ENCODE measurements at regions of chr2 and their contacts with region 1.

Region 1: DNA sequence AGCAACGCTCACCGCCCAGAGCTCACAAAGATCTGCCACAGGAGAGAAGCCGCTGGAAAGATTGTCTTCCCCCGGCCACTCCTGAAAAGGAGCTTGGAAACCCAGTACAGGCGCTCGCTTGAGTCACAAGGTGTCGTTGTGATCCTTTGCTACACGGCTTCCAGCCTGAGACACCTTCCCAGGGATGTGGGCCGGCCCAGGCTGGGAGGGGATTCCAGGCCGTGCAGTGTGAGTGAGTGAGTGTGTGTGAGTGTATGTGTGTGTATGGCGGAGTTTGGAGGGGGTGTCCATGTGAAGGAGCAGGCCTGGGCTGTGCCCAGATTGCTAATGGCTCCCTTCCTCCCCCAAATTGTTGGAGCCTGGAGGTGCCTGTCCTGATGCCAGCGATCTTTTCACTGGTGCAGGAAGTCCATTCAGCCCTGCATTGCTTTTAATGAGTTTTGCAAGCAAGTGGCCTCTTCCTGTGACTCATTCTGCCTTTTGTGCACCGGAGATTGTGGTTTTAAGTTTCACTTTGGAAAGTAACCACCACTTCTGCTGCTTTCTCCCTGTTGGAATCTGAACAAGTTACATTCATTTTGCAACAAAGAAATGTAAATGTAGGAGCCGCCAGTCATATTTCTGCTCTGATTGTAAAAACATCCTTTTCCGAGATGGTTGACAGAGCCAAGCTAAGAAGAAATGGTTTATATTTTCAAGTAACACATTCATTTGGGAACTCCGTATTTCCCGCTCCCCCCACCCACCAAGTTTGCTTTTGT is 83.7 kb downstream of the LPIN1 start:
- DNase-seq: peak; percentile 69 to 75
- ATAC-seq: peak; percentile 78 to 89 (median 81)
- H3K4me3 ChIP-seq: peak overlapping the region; percentile 39
- H3K27ac ChIP-seq: peak overlapping the region; percentile 64
- H3K4me1 ChIP-seq: peaks cover 21% of the 10 kb centered on the region
- H3K27me3 ChIP-seq: no peaks in the 10 kb centered on the region
- CTCF ChIP-seq: peak; percentile 26

Region 2: DNA sequence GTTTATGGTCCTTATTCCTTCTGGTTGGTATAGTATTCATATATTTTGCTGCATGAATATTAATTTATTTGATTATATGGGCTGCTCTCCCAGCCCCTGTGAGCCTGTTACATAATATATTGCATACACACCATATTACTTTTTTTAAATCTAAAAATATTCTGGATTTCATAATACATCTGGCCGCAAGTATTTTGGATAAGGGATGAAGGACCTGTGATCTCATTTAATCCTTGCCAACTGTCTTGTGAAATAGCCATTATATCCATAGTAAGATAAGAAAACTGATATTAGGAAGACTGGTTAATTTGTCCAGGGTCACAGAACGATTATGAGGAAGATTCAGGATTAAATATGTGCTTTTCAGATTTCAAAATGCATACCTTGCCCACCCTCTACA is 349.9 kb after region 1 on chr2:
- intact Hi-C with region 1: no loop called
- DNase-seq: no peak
- ATAC-seq: no peak
- H3K4me3 ChIP-seq: no peak overlapping the region
- H3K27ac ChIP-seq: no peak overlapping the region
- H3K4me1 ChIP-seq: peaks cover 23% of the 10 kb centered on the region
- H3K27me3 ChIP-seq: no peaks in the 10 kb centered on the region
- CTCF ChIP-seq: no peak

Region 3: GRCh38 chr2:12931186-12931844 is 1101.2 kb after region 1 on chr2:
- intact Hi-C with region 1: loop called (anchors 5 to 10 kb)
- DNase-seq: no peak
- ATAC-seq: peak; percentile 61 to 93 (median 87)
- H3K4me3 ChIP-seq: no peak overlapping the region
- H3K27ac ChIP-seq: no peak overlapping the region
- H3K4me1 ChIP-seq: no peaks in the 10 kb centered on the region
- H3K27me3 ChIP-seq: peaks cover 0 to 3% (median 0%) of the 10 kb centered on the region in 3 donors
- CTCF ChIP-seq: peak; percentile 91

Region 4: GRCh38 chr2:13006829-13007717 is 1176.9 kb after region 1 on chr2:
- intact Hi-C with region 1: loop called in 1 of 2 experiments (anchors 5 kb)
- DNase-seq: peak in 1 of 2 donors; percentile 30
- ATAC-seq: peak; percentile 58 to 89 (median 80)
- H3K4me3 ChIP-seq: no peak overlapping the region
- H3K27ac ChIP-seq: no peak overlapping the region
- H3K4me1 ChIP-seq: no peaks in the 10 kb centered on the region
- H3K27me3 ChIP-seq: no peaks in the 10 kb centered on the region
- CTCF ChIP-seq: peak; percentile 87